ENCODE measurements at regions of chr5 and their contacts with region 1.

Region 1: DNA sequence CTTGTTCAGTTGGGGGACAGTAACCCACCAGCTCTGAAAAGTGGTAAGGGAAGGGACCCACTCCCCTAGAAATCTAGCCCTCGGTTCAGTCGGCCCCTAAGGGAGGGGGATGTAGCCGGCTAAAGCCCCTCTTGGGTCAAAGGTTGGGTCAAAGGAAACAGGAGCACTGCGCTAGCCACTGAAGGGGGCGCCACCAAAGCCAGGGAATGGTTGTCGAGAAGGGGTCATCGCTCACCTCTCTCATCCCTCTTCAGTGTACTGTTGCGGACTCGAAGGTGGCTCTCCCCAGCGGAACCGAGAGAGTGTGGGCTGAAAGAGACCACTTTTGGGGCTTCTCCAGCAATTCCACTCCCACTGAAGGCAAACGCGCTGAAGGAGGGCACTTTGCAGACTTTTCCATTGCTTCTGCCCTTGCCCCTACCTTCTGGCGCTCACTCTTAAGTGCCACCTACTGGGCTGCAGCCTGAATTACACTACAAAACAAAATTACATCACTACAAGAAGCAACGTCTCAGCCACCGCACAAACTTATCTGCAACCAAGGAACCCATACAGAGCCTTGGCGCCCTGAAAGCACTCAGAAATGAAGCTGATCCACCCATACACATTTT is 396.9 kb downstream of the PDE4D start:
- DNase-seq: peak; percentile 60
- H3K4me3 ChIP-seq: no peak overlapping the region
- H3K27ac ChIP-seq: no peak overlapping the region
- H3K4me1 ChIP-seq: no peaks in the 10 kb centered on the region
- H3K27me3 ChIP-seq: peaks cover 32% of the 10 kb centered on the region
- CTCF ChIP-seq: peak; percentile 71

Region 2: DNA sequence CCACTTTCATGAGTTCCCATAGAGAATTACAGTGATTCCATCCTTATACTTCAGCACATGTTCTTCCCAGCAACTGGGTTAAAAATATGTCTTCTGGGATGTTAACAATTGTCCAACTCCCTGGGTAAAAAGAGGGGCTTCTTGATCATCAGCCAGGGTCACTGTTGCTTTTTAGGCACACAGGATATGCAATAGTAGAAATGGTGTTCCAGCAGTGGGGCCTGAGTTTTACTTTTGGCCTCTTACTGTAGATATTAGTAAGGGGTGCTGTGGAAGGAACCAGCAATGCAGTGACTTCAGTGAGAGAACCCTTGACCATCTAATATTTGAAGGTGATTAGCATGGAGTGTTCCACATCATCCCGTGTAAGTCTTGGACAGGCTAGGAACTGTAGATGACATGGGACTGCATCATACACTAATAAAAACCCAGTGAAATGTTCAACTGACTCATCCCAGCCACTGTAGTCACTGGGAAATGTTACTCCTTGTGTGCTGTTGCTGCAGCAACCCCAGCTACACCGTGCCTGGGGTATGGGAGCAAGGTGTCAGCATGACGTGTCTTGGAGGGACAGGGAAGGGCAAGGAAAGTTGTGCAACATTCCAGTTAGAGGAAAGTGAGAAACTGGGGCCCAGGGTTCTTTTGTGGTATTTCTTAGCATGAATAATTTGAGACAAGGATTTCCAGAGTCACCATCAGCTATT is 302.9 kb before region 1 on chr5:
- CTCF ChIA-PET with region 1: no interaction called
- POLR2A ChIA-PET with region 1: no interaction called
- intact Hi-C with region 1: loop called (anchors 10 kb)
- DNase-seq: no peak
- H3K4me3 ChIP-seq: no peak overlapping the region
- H3K27ac ChIP-seq: no peak overlapping the region
- H3K4me1 ChIP-seq: peaks cover under 1% of the 10 kb centered on the region
- H3K27me3 ChIP-seq: peaks cover 10% of the 10 kb centered on the region
- CTCF ChIP-seq: no peak

Region 3: DNA sequence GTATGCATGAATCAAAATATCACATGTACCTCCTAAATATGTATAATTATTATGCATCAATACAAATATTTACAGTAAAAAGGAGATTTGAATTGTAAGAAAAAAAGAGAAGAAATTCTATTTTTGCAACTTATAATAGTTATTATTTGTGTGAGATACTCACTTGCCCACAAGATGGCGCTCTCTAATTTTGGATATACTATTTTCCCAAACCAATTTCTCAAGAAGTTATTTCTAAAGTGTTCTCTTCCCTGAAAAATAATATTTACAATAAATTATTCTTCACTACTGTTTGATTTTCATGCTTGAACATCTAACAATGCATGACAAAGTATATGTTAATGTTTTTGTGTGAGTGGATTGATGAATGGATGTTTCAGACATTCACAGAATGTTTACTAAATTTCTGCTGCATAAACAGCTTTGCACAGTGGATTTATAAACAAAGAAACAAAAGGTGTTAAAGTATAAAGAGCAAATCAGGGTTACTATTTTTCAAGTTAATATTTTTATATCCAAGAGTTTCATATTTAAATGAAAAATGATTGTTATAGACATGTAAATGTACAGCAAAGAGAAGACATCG is 106.5 kb before region 1 on chr5:
- CTCF ChIA-PET with region 1: no interaction called
- POLR2A ChIA-PET with region 1: no interaction called
- intact Hi-C with region 1: loop called (anchors 5 kb)
- DNase-seq: peak; percentile 35
- H3K4me3 ChIP-seq: no peak overlapping the region
- H3K27ac ChIP-seq: no peak overlapping the region
- H3K4me1 ChIP-seq: no peaks in the 10 kb centered on the region
- H3K27me3 ChIP-seq: peaks cover 5% of the 10 kb centered on the region
- CTCF ChIP-seq: peak; percentile 71